HepG2 (cell line): ENCODE measurements at regions of chr12 and their contacts with region 1.

Region 1: DNA sequence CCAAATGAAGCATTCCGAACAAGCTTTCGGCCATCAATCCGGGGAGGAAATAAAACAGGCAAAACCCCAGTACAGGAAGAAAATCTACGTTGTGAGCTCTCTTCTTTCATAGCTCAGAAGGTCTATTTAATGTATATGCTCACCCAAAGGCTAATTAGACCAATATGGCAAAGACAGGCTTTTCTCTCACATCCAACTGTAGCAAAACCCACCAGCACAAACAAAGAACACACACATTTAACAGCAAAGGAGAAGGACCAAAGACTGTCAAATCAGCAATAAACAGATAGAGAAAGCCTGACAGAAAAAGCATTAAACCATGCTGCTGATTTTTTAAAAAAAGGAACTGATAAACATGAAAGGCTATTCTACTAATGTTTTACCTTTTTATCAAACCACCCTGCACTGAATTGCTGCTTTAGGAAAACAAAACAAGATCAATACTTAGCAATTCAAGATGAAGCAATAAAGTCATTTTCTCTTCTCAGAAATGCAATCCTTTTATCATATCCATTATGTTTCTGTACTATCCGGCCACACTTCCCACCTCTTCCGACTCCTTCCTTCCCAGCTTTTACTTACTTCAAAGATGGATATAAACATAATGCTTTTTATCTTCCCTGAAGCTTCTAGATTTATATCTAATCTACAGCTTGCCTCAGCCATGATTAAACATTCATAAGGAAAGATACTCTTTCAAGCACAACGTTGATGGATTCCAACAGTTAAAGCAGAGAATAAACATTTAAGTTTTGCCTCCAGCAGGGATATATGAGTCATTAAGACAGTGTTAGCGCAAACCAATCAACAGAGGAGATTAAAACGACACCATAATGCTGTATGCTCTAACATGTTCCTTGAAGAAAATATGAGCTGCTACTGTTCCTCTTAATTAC is 74.6 kb upstream of the BBS10 start:
- DNase-seq: no peak
- ATAC-seq: no peak
- H3K4me3 ChIP-seq: no peak overlapping the region
- H3K27ac ChIP-seq: no peak overlapping the region
- H3K4me1 ChIP-seq: peaks cover 23% of the 10 kb centered on the region
- H3K27me3 ChIP-seq: no peaks in the 10 kb centered on the region
- CTCF ChIP-seq: no peak
- EP300 ChIP-seq: no peak
- POLR2A ChIP-seq: no peak
- RAD21 ChIP-seq: no peak

Region 2: GRCh38 chr12:76489737-76490136 is 66.9 kb after region 1 on chr12:
- CTCF ChIA-PET with region 1: no interaction called
- POLR2A ChIA-PET with region 1: no interaction called
- in situ Hi-C with region 1: no loop called
- intact Hi-C with region 1: loop called (anchors 10 kb)
- DNase-seq: no peak
- ATAC-seq: no peak
- H3K4me3 ChIP-seq: no peak overlapping the region
- H3K27ac ChIP-seq: no peak overlapping the region
- H3K4me1 ChIP-seq: no peaks in the 10 kb centered on the region
- H3K27me3 ChIP-seq: no peaks in the 10 kb centered on the region
- CTCF ChIP-seq: no peak
- EP300 ChIP-seq: no peak
- POLR2A ChIP-seq: no peak
- RAD21 ChIP-seq: no peak